Endothelial cell of umbilical vein (primary cell): ENCODE measurements at regions of chr3 and their contacts with region 1.

Region 1: DNA sequence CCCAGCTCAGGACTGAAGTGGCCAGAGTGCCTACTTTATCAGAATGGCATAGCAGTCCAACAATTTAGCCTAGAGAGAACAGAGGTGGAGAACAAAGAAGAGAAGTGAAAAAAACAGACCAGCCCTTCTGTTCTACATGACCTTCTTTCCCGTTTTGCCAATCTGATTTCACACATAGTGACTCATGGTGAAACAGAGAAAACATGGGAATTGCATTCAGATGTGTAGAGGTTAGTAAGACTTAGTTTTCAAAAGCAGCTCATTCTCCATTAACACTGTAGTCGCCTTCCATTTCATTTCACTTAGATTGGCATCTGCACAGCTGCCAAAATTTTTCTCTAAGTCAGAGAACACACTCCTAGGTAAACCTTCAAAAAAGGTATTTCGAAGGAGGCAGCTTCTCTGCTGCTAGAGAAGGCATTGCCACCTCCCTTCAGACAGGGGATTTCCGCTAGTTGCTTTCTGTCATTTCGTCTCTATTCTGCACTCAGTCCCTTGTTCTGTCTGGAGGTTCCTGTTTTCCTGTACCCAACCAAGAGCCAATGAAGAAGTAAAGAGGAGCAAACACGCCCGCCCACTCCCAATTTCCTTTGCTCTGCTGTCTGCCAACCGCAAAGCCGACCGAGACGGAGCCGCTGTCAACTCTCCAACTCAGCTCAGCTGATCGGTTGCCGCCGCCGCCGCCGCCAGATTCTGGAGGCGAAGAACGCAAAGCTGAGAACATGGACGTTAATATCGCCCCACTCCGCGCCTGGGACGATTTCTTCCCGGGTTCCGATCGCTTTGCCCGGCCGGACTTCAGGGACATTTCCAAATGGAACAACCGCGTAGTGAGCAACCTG is at the start of gene ARL6IP5:
- DNase-seq: peak; percentile 93
- H3K4me3 ChIP-seq: peak within 1 kb of the TSS; percentile 77 to 87 (median 80)
- H3K27ac ChIP-seq: peak within 1 kb of the TSS; percentile 68
- H3K4me1 ChIP-seq: peaks cover 72% of the 10 kb centered on the region
- H3K27me3 ChIP-seq: no peaks in the 10 kb centered on the region
- CTCF ChIP-seq: no peak
- POLR2A ChIP-seq: peak; percentile 70
- total RNA-seq, gene ARL6IP5: 111 and 116 TPM in 2 replicates

Region 2: GRCh38 chr3:69013253-69014021 is 71.1 kb before region 1 on chr3 and contains the start of gene EOGT:
- CTCF ChIA-PET with region 1: no interaction called
- POLR2A ChIA-PET with region 1: interaction called, 4 read pairs
- dilution Hi-C with region 1: no loop called
- intact Hi-C with region 1: loop called (anchors 2 kb)
- DNase-seq: peak; percentile 93
- H3K4me3 ChIP-seq: peak within 1 kb of the TSS; percentile 56 to 80 (median 76)
- H3K27ac ChIP-seq: peak within 1 kb of the TSS; percentile 97
- H3K4me1 ChIP-seq: peaks cover 53% of the 10 kb centered on the region
- H3K27me3 ChIP-seq: no peaks in the 10 kb centered on the region
- CTCF ChIP-seq: peak; percentile 56 to 77
- POLR2A ChIP-seq: peak; percentile 94
- total RNA-seq, gene EOGT: 99.4 and 103 TPM in 2 replicates

Region 3: GRCh38 chr3:69033470-69033869 is 51.1 kb before region 1 on chr3:
- CTCF ChIA-PET with region 1: no interaction called
- POLR2A ChIA-PET with region 1: no interaction called
- dilution Hi-C with region 1: no loop called
- intact Hi-C with region 1: loop called (anchors 2 kb)
- DNase-seq: peak; percentile 94
- H3K4me3 ChIP-seq: peak overlapping the region in 1 of 3 experiments; percentile 33
- H3K27ac ChIP-seq: peak overlapping the region; percentile 96
- H3K4me1 ChIP-seq: peaks cover 25% of the 10 kb centered on the region
- H3K27me3 ChIP-seq: no peaks in the 10 kb centered on the region
- CTCF ChIP-seq: no peak
- POLR2A ChIP-seq: no peak

Region 4: DNA sequence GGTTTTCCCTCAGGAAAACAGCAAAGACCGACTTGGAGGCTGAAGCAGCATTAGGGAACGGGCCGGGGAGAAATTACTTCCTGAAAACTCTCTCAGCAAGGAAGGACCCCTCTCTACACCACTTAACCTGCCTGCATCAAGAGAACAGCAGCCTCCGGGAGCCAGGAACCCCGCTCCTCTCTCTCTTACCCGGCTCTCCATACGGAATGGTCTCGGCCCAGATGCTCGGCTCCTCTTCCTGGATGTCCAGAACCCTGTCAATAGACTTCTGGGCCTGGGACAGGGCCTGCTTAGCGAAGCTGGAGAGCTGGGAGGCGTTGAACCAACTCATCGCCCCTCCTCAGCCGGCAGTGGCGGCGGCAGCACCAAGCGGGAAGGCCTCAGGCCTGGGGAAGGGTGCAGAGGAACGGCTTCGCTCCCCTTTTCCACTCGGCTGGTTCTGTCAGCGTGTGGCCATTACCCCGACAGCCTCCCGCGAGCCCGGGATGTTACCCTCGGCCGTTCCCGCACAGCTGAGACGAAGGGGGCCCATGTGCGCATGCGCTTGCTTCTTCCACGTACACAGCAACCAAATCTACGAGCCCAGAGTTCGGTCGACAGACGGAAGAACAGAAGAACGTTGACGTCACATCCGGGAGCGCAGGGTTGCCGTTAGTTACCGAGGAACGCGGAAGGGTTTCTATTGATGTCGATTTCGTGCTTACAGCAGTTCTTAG is 32.6 kb before region 1 on chr3 and contains the start of gene TMF1:
- CTCF ChIA-PET with region 1: no interaction called
- POLR2A ChIA-PET with region 1: interaction called, 3 read pairs
- dilution Hi-C with region 1: no loop called
- intact Hi-C with region 1: loop called (anchors 1 kb)
- DNase-seq: peak; percentile 99
- H3K4me3 ChIP-seq: peak within 1 kb of the TSS; percentile 47 to 94 (median 85)
- H3K27ac ChIP-seq: peak within 1 kb of the TSS; percentile 76
- H3K4me1 ChIP-seq: peaks cover 14% of the 10 kb centered on the region
- H3K27me3 ChIP-seq: no peaks in the 10 kb centered on the region
- CTCF ChIP-seq: no peak
- POLR2A ChIP-seq: peak; percentile 84
- total RNA-seq, gene TMF1: 32.3 and 32.7 TPM in 2 replicates

Region 5: DNA sequence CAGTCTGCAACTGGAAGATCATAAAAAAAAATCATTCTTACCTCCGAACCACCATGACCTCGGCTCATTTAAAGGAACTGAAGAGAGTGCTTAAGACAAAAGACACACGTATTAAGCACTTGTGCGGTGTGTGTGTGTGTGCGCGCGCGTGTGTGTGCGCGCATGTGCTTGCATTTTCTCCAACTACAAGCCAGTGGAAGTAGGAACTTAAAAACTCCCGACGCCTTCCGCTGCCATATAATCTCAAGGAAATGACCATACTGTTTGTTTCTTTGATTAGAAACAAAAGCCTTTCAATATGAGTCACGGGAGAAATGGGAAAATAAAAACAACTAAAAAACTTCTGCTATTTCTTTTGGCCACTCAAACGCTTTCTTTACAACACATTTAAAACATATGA is 269.0 kb after region 1 on chr3:
- CTCF ChIA-PET with region 1: no interaction called
- POLR2A ChIA-PET with region 1: no interaction called
- dilution Hi-C with region 1: no loop called
- intact Hi-C with region 1: loop called (anchors 2 kb)
- DNase-seq: peak; percentile 98
- H3K4me3 ChIP-seq: peak overlapping the region; percentile 45 to 97 (median 88)
- H3K27ac ChIP-seq: peak overlapping the region; percentile 100
- H3K4me1 ChIP-seq: peaks cover 32% of the 10 kb centered on the region
- H3K27me3 ChIP-seq: no peaks in the 10 kb centered on the region
- CTCF ChIP-seq: no peak
- POLR2A ChIP-seq: peak; percentile 98

Region 6: GRCh38 chr3:69602112-69602511 is 517.6 kb after region 1 on chr3:
- CTCF ChIA-PET with region 1: no interaction called
- POLR2A ChIA-PET with region 1: no interaction called
- dilution Hi-C with region 1: no loop called
- intact Hi-C with region 1: no loop called
- DNase-seq: no peak
- H3K4me3 ChIP-seq: no peak overlapping the region
- H3K27ac ChIP-seq: no peak overlapping the region
- H3K4me1 ChIP-seq: no peaks in the 10 kb centered on the region
- H3K27me3 ChIP-seq: peaks cover 5 to 12% of the 10 kb centered on the region in 2 experiments
- CTCF ChIP-seq: no peak
- POLR2A ChIP-seq: no peak